Transverse colon (tissue), 4 donors: ENCODE measurements at regions of chr2 and their contacts with region 1.

Region 1: GRCh38 chr2:175838979-175839378 is 163.1 kb downstream of the LNPK start:
- DNase-seq: no peak
- H3K4me3 ChIP-seq: no peak overlapping the region
- H3K27ac ChIP-seq: no peak overlapping the region
- H3K4me1 ChIP-seq: peaks cover 0 to 9% (median 2%) of the 10 kb centered on the region in 4 donors
- H3K27me3 ChIP-seq: no peaks in the 10 kb centered on the region
- CTCF ChIP-seq: no peak
- EP300 ChIP-seq: no peak
- POLR2A ChIP-seq: no peak

Region 2: DNA sequence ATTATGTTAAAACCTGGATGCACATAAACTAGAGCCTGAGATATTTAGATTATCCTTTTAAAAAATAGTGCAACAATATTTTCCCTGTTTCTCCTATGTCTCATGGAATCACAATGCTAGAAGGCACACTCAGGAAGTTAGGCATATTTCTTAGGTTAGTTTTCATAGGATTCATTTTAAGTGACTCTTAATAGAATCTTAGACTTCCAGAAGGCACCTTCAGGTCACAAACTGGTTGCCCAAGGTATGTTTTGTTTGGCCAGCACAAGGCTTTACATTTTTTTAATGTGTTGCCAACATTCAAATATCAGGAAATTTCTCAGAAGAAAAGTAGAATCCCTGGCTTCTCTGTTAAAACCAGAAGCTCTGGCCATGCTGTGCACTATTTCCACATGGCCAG is 33.7 kb after region 1 on chr2:
- in situ Hi-C with region 1: no loop called
- intact Hi-C with region 1: loop called (anchors 1 kb)
- DNase-seq: no peak
- H3K4me3 ChIP-seq: no peak overlapping the region
- H3K27ac ChIP-seq: no peak overlapping the region
- H3K4me1 ChIP-seq: no peaks in the 10 kb centered on the region
- H3K27me3 ChIP-seq: peaks cover 5% of the 10 kb centered on the region
- CTCF ChIP-seq: no peak
- EP300 ChIP-seq: no peak
- POLR2A ChIP-seq: no peak

Region 3: DNA sequence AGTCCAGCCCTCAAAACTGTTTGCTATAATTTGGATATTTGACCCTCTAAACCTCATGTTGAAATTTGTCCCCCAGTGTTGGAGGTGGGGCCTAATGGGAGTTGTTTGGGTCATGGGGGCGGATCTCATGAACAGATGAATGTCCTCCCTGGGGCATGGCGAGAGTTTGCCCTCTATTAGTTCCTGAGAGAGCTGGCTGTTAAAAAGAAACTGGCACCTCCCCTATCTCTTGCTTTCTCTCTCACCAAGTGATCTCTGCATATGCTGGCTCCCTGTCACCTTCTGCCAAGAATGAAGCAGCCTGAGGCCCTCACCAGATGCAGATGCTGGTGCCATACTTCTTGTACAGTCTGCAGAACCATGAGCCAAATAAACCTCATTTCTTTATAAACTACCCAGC is 151.1 kb after region 1 on chr2:
- in situ Hi-C with region 1: no loop called
- intact Hi-C with region 1: no loop called
- DNase-seq: no peak
- H3K4me3 ChIP-seq: no peak overlapping the region
- H3K27ac ChIP-seq: no peak overlapping the region
- H3K4me1 ChIP-seq: no peaks in the 10 kb centered on the region
- H3K27me3 ChIP-seq: no peaks in the 10 kb centered on the region
- CTCF ChIP-seq: no peak
- EP300 ChIP-seq: no peak
- POLR2A ChIP-seq: no peak